Aorta (tissue), 5 donors: ENCODE measurements at regions of chr1 and their contacts with region 1.

Region 1: DNA sequence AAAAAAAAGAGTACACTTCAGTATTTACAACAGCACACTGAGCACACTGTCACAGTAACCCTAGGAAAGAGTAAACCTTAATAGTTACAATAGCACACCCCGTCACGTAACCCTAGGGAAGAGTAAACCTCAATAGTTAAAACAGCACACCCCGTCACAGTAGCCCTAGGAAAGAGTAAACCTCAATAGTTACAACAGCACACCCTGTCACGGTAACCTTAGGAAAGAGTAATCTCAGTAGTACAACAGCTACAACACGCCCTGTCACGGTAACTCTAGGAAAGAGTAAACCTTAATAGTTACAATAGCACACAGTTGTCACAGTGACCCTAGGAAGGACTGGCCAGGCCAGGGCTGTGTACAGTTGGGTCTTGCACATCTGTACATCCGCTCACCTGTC is 3.0 kb downstream of the CDK11A start:
- DNase-seq: peak in 1 of 2 donors; percentile 2
- ATAC-seq: no peak
- H3K4me3 ChIP-seq: no peak overlapping the region
- H3K27ac ChIP-seq: no peak overlapping the region
- H3K4me1 ChIP-seq: no peaks in the 10 kb centered on the region
- H3K27me3 ChIP-seq: no peaks in the 10 kb centered on the region

Region 2: GRCh38 chr1:1665800-1666251 is 55.4 kb before region 1 on chr1:
- intact Hi-C with region 1: loop called in 1 of 2 experiments (anchors 10 kb)
- DNase-seq: peak; percentile 34 to 79
- ATAC-seq: no peak
- H3K4me3 ChIP-seq: no peak overlapping the region
- H3K27ac ChIP-seq: no peak overlapping the region
- H3K4me1 ChIP-seq: no peaks in the 10 kb centered on the region
- H3K27me3 ChIP-seq: no peaks in the 10 kb centered on the region